ENCODE measurements at regions of chr12 and their contacts with region 1.

Region 1: DNA sequence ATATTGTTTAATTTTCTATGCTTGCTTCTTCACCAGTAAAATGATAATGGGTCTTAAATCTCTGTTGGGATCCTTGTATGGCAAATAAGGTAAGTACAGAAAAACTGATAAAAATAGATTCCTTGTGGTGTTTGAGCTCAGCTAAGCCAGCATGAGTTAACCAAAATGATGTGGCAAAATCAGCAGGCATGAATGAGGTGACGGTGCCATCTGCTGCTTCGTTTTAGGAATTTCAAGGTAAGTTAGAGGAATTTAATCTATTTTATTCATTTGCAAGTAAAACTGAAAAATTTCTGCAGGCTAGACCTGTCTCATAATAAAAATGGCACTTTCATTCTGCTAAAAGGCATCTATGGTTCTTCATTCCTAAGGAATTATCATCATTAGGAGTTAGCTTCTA is 10.0 kb upstream of the CLEC7A start:
- DNase-seq: no peak
- ATAC-seq: no peak

Region 2: DNA sequence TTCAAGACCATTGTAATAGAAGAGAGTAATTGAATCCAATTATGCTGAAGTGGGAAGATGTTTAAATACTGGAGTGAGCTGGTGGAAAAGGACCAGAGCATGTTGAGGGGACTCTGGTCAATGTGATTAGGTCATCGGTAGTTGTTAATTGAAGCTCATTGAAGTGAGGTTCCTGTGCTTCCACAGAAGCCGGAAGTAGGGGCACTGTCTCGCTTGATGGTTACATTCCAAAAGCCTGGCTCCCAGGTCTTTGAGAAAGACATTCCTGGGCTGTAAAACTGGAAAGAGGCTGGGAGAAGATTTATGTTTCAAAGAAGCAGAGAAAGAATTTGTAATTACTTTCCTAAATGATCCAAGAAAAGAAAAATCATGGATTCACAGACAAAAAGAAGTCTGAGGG is 394.8 kb before region 1 on chr12:
- intact Hi-C with region 1: loop called in 1 of 2 experiments (anchors 5 kb)
- DNase-seq: no peak
- ATAC-seq: no peak

Region 3: DNA sequence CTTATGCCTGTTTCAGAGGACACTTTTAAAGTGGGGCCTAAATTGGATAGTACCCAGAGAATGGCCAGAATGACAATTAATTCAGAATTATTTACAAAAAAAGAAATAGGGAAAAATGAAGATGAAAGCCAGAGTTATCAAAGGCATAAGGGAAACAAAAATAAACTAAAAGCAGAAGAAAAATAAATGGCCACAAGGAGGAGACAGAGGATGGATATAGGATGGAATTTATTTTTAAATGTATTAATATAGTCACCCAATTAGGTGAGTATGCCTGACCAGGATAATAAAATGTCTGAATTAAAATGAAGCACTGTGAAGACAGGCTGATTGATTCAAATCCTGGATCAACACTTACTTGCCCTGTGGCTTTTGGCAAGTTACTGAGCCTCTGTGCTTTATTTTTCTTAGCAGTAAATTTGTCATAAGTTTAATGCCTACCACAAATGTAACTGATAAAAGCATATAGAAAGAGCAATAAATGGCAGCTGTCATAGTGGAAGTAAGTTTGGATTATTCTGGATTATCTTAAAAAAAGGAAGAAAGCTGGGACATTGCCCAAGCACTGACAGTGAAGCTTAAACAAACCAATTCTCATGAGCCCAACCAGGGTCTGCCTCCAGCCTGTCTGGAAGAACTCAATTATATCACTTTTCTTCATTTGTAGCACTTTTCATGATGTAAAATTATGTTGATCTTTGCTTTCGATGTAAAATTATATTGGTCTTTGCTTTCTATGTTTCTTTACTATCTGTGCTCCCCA is 106.0 kb before region 1 on chr12:
- intact Hi-C with region 1: loop called in 1 of 2 experiments (anchors 5 kb)
- DNase-seq: no peak
- ATAC-seq: no peak

Measured in left colon (tissue), 2 donors.